ENCODE measurements at regions of chr14 and their contacts with region 1.

Region 1: GRCh38 chr14:61694830-61695694 is at the start of gene HIF1A:
- DNase-seq: peak; percentile 99
- ATAC-seq: peak; percentile 87
- H3K4me3 Mint-ChIP-seq: peak within 1 kb of the TSS; percentile 99
- H3K27ac Mint-ChIP-seq: peak within 1 kb of the TSS; percentile 98
- H3K4me1 Mint-ChIP-seq: peaks cover 50% of the 10 kb centered on the region
- H3K27me3 Mint-ChIP-seq: no peaks in the 10 kb centered on the region
- total RNA-seq, gene HIF1A: 196 to 329 TPM

Region 2: GRCh38 chr14:60248697-60249318 is 1446.3 kb before region 1 on chr14 and contains the start of gene PPM1A:
- CTCF ChIA-PET with region 1: no interaction called
- POLR2A ChIA-PET with region 1: no interaction called
- intact Hi-C with region 1: loop called in 1 of 2 experiments (anchors 5 kb)
- DNase-seq: peak; percentile 97
- ATAC-seq: peak; percentile 73
- H3K4me3 Mint-ChIP-seq: peak within 1 kb of the TSS; percentile 94
- H3K27ac Mint-ChIP-seq: peak within 1 kb of the TSS; percentile 100
- H3K4me1 Mint-ChIP-seq: peaks cover 50% of the 10 kb centered on the region
- H3K27me3 Mint-ChIP-seq: no peaks in the 10 kb centered on the region
- total RNA-seq, gene PPM1A: 30.4 to 41.5 TPM

Region 3: DNA sequence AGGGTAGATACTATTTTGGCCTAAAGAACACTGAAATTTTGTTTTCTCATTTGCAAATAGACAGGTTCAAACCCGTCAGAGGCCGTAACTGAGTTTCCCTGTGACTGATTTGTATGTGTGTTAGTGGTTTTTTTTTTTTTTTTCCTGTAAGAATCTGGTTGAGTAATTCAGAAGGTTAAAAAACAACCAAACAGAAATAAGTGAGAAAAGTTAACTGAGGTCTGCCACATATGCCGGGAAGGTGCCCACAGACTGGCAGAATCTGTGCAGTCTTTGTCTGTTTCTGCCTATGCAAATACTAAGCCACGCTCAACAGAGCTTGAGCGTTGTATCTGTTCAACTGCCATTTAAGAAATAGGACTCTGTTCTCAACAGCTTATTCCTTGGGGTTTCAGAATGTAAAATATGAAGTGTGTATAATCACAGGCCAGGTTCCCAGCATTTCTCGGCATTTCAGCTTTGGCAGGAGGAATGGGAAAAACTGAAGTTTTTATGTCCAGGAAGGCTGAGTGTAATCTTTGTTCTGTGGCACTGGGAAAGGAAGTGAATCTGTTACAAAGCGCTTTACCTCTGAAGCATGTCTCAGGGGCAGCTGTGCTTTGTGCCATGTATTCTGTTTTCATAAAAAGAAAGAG is 191.8 kb before region 1 on chr14:
- CTCF ChIA-PET with region 1: interaction called, 3 read pairs
- POLR2A ChIA-PET with region 1: interaction called, 7 read pairs
- intact Hi-C with region 1: loop called (anchors 1 kb)
- DNase-seq: peak; percentile 90
- ATAC-seq: peak; percentile 80
- H3K4me3 Mint-ChIP-seq: peak overlapping the region; percentile 56
- H3K27ac Mint-ChIP-seq: peak overlapping the region; percentile 99
- H3K4me1 Mint-ChIP-seq: peaks cover 98% of the 10 kb centered on the region
- H3K27me3 Mint-ChIP-seq: no peaks in the 10 kb centered on the region

Region 4: DNA sequence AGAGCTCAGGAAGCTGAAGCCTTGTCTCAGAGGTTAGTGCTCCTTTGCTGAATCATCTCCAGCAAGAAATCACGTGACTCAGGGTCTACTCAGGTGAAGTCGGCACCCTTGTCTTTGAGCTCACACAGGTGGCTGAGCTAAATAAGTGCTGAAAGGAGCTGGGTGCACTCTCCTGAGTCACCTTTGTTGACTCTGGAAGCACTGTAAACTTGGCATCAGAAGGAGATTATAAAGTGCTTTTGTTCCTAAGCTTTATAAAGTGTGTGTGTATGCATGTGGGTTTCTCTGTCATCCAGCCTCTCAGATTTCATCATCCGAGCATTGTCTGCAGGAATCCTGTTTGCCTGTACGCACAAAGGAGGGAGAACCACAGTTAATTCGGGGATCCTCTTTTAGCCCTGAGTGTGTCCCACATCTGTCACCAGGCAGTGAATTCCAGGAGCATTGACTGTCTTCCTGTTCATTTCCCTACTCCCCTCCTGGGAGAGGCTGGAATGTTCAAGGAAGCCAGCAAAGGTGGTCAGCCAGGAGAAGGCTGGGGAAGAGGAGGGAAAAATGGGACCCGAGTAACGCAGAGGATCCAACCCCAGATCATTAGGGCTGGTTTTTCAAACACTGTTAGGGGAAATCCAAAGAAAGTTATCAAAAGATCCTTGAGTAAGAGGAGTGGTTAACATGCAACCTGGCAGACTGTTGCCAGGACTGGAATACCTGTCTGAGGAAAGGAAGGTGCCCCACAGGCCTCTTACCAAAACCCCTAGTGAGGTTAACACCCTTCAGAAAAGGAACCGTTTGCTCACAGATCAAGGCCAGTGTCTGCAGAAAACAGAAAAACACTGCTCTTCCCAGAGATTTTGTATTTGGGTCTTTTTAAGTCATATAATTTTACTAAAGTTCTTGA is 157.2 kb before region 1 on chr14:
- CTCF ChIA-PET with region 1: no interaction called
- POLR2A ChIA-PET with region 1: no interaction called
- intact Hi-C with region 1: no loop called
- DNase-seq: peak; percentile 69
- ATAC-seq: peak; percentile 78
- H3K4me3 Mint-ChIP-seq: peak overlapping the region; percentile 16
- H3K27ac Mint-ChIP-seq: peak overlapping the region; percentile 89
- H3K4me1 Mint-ChIP-seq: peaks cover 68% of the 10 kb centered on the region
- H3K27me3 Mint-ChIP-seq: no peaks in the 10 kb centered on the region

Region 5: DNA sequence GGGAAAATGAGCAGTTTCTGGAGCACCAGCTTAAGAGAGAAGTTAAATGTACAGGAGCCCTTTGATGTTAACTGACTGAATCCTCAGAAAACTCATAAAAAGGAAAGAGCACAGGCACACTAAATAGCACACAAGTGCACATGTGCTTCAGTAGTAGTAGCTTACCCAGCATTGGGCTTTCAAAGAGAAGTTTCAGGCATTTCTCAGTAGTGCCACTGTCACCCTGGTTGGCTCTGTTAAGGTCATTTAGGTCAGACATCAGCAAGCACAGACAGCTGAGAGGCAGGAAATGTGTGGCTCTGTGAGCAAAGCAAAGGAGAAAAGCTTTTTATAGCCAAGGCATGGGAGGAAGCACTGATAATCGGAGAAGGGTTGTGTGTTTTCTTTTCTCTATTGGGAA is 96.1 kb before region 1 on chr14:
- CTCF ChIA-PET with region 1: no interaction called
- POLR2A ChIA-PET with region 1: no interaction called
- intact Hi-C with region 1: loop called (anchors 1 kb)
- DNase-seq: peak; percentile 47
- ATAC-seq: peak; percentile 49
- H3K4me3 Mint-ChIP-seq: no peak overlapping the region
- H3K27ac Mint-ChIP-seq: peak overlapping the region; percentile 59
- H3K4me1 Mint-ChIP-seq: peaks cover 55% of the 10 kb centered on the region
- H3K27me3 Mint-ChIP-seq: no peaks in the 10 kb centered on the region

Region 6: GRCh38 chr14:61671082-61671481 is 24.0 kb before region 1 on chr14:
- CTCF ChIA-PET with region 1: interaction called, 7 read pairs
- POLR2A ChIA-PET with region 1: interaction called, 7 read pairs
- intact Hi-C with region 1: loop called (anchors 1 kb)
- DNase-seq: peak; percentile 66
- ATAC-seq: peak; percentile 85
- H3K4me3 Mint-ChIP-seq: no peak overlapping the region
- H3K27ac Mint-ChIP-seq: no peak overlapping the region
- H3K4me1 Mint-ChIP-seq: peaks cover 25% of the 10 kb centered on the region
- H3K27me3 Mint-ChIP-seq: no peaks in the 10 kb centered on the region

Region 7: DNA sequence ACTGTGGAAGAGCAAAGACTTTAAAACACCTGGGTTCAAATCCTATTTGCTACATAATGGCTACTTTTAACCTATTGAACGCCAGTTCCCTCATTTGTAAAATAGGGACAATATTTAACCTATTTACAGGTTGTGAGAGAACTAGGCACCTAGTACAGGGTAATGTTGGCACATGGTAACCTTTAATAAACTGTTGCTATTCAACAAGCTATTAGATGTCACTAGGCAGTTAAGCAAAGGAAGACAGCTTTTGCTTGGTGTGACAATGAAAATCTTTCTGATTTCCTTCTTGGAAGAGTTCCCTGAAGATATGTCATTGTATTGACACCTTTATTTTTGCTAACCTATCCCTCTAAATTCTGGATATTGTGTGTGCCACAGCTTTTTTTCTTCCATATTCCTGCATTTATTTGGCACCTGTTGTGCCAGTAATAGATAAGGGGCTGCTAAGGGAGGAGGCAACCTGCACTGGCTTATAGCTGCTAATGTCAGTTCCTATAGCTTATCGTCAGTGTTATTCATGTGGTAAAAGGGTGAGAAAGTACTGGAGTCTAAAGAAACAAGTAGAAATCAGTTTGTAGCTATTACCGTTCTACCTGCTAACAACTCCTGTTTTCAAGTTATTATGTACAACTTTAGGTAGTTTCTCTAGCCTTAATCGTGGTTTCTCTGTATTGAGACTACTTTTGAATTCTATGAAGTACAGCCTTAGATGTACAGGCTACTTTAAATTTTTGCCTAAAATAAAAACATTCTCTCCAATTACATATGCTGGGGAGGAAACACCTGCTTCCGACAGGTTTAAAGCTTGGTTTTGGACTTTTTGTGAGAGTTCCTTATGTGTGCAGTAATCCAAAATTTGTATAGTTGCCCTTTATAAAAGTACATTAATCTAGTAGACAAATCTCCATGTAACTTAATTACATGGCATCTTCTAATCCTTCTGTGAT is 24.6 kb after region 1 on chr14:
- CTCF ChIA-PET with region 1: interaction called, 5 read pairs
- POLR2A ChIA-PET with region 1: interaction called, 4 read pairs
- intact Hi-C with region 1: loop called in 1 of 2 experiments (anchors 2 kb)
- DNase-seq: no peak
- ATAC-seq: peak; percentile 52
- H3K4me3 Mint-ChIP-seq: peak overlapping the region; percentile 41
- H3K27ac Mint-ChIP-seq: peak overlapping the region; percentile 81
- H3K4me1 Mint-ChIP-seq: peaks cover 83% of the 10 kb centered on the region
- H3K27me3 Mint-ChIP-seq: no peaks in the 10 kb centered on the region

Region 8: GRCh38 chr14:61797309-61797708 is 102.2 kb after region 1 on chr14:
- CTCF ChIA-PET with region 1: no interaction called
- POLR2A ChIA-PET with region 1: no interaction called
- intact Hi-C with region 1: no loop called
- DNase-seq: no peak
- ATAC-seq: no peak
- H3K4me3 Mint-ChIP-seq: no peak overlapping the region
- H3K27ac Mint-ChIP-seq: no peak overlapping the region
- H3K4me1 Mint-ChIP-seq: peaks cover 2% of the 10 kb centered on the region
- H3K27me3 Mint-ChIP-seq: no peaks in the 10 kb centered on the region

Region 9: GRCh38 chr14:63641473-63642228 is 1946.6 kb after region 1 on chr14 and contains the start of gene WDR89:
- CTCF ChIA-PET with region 1: no interaction called
- POLR2A ChIA-PET with region 1: no interaction called
- intact Hi-C with region 1: loop called in 1 of 2 experiments (anchors 10 kb)
- DNase-seq: peak; percentile 98
- ATAC-seq: peak; percentile 87
- H3K4me3 Mint-ChIP-seq: peak within 1 kb of the TSS; percentile 79
- H3K27ac Mint-ChIP-seq: peak within 1 kb of the TSS; percentile 97
- H3K4me1 Mint-ChIP-seq: peaks cover 43% of the 10 kb centered on the region
- H3K27me3 Mint-ChIP-seq: no peaks in the 10 kb centered on the region
- total RNA-seq, gene WDR89: 13.9 to 27.2 TPM